Calu3 (cell line): ENCODE measurements at regions of chr3 and their contacts with region 1.

Region 1: DNA sequence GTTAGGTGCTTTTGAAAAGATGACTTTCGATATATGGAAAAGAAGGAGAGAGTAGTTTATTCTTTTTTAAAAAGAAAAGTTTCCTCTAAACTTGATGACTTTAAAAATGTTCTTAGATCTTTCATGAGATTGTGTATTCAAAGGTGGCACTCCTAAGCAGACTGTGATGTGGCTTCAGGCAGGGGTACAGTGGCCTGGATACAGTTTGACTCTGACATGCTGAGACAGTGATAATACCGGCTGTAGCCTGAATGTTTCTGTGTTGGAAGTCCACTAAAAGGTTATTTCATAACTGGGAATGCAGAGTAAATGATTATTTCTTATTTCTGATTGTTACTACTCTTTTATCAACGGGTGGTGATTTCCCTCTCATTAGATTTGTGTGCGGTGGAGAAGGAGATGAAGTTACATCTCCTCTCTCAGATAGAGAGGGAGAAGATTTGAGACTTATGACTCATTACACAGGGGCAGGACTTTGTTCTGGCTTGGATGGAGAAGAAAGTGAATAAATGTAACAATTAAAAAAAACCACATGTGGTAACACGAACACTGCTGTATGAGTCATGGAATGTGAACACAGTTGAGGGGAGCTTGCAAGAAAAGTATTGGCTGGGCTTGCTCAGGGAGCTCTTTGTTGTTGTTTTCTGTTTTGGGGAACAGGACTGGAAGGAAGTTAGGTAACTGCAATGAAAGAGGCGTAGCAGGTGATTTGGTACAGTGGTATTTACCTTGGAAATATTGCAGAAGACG is 21.6 kb downstream of the SPTSSB start:
- DNase-seq: peak; percentile 66
- H3K4me3 Mint-ChIP-seq: peak overlapping the region; percentile 14
- H3K27ac Mint-ChIP-seq: peak overlapping the region; percentile 65
- H3K4me1 Mint-ChIP-seq: peaks cover 38% of the 10 kb centered on the region
- H3K27me3 Mint-ChIP-seq: no peaks in the 10 kb centered on the region
- CTCF ChIP-seq: no peak

Region 2: GRCh38 chr3:161171113-161171512 is 178.6 kb before region 1 on chr3:
- CTCF ChIA-PET with region 1: no interaction called
- intact Hi-C with region 1: no loop called
- DNase-seq: no peak
- H3K4me3 Mint-ChIP-seq: no peak overlapping the region
- H3K27ac Mint-ChIP-seq: no peak overlapping the region
- H3K4me1 Mint-ChIP-seq: no peaks in the 10 kb centered on the region
- H3K27me3 Mint-ChIP-seq: no peaks in the 10 kb centered on the region
- CTCF ChIP-seq: no peak

Region 3: DNA sequence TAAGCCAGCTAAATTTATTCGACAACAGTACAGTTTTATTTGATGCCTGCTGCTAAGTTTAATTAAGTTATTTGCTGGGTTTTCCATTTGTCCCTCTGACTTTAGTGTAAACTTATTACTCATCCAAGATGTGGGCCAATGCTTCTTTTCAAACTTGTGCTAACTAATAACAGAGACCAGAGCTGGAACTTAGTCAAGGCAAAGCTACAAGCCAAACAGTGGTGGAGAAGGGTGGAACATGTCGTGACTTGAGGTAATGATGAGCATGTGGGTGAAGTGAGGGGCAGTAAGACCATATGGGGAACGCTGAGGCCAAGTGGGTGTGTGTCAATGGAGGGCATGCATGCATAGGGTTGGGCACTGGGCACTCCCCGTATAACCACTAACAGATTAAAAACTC is 64.7 kb before region 1 on chr3:
- CTCF ChIA-PET with region 1: no interaction called
- intact Hi-C with region 1: no loop called
- DNase-seq: no peak
- H3K4me3 Mint-ChIP-seq: no peak overlapping the region
- H3K27ac Mint-ChIP-seq: no peak overlapping the region
- H3K4me1 Mint-ChIP-seq: peaks cover under 1% of the 10 kb centered on the region
- H3K27me3 Mint-ChIP-seq: no peaks in the 10 kb centered on the region
- CTCF ChIP-seq: no peak

Region 4: GRCh38 chr3:161361680-161362079 is 12.0 kb after region 1 on chr3:
- CTCF ChIA-PET with region 1: interaction called, 20 read pairs
- intact Hi-C with region 1: no loop called
- DNase-seq: no peak
- H3K4me3 Mint-ChIP-seq: no peak overlapping the region
- H3K27ac Mint-ChIP-seq: no peak overlapping the region
- H3K4me1 Mint-ChIP-seq: peaks cover 14% of the 10 kb centered on the region
- H3K27me3 Mint-ChIP-seq: no peaks in the 10 kb centered on the region
- CTCF ChIP-seq: no peak

Region 5: DNA sequence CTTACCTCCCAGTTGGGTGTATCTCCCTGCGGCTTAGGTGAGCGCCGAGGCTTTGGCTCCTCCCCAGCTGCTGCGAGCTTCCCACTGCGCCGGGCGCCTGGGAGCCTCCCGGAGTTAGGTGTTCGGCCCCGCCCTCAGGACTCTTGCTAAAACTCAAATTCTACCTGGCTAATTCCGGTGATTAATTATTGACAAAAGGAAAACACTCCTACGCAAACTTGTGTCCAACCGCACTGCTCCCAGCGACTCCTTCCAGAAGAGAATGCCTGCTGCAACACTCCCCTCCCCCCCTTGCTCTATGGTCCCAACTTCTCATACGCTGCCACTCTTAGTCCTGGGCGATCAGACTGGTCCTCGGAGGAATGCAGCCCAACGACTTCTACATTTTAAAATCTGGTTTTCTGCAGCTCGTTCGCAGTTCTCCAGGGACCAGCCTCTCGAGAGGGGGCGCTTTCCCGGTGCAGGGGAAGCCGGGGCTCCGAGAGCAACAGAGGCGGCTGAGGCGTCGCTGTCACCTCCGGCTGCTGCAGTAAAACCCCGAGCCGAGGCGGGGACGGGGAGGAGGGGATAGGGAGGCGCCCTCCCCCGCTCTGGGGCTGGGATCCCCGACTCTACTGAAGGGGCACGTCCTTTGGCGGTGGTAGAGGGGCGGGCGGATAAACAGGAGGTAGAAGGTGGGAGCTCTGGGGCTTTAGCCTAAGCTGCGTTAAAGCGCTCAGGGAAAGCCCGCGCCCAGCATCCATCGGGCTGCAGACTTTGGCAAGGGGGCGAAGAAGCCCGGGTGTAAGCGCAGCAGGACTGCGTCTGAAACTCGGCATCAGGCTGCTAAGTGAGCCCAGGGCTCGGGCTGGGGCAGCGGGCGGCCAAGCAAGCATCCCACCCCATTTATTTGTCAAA is 22.0 kb after region 1 on chr3 and contains the start of gene SPTSSB:
- CTCF ChIA-PET with region 1: interaction called, 10 read pairs
- intact Hi-C with region 1: no loop called
- DNase-seq: peak; percentile 90
- H3K4me3 Mint-ChIP-seq: peak within 1 kb of the TSS; percentile 88
- H3K27ac Mint-ChIP-seq: peak within 1 kb of the TSS; percentile 30
- H3K4me1 Mint-ChIP-seq: peaks cover 12% of the 10 kb centered on the region
- H3K27me3 Mint-ChIP-seq: no peaks in the 10 kb centered on the region
- CTCF ChIP-seq: peak; percentile 19
- total RNA-seq, gene SPTSSB: 3.0 and 8.1 TPM in 2 replicates